Mucosa of descending colon (tissue), 3 donors: ENCODE measurements at regions of chr13 and their contacts with region 1.

Region 1: GRCh38 chr13:23466144-23467002 is 32.9 kb upstream of the SACS start:
- DNase-seq: peak; percentile 59 to 62 (median 60)
- ATAC-seq: peak; percentile 91
- H3K4me3 ChIP-seq: no peak overlapping the region
- H3K4me1 ChIP-seq: peaks cover 4% of the 10 kb centered on the region
- CTCF ChIP-seq: no peak

Region 2: DNA sequence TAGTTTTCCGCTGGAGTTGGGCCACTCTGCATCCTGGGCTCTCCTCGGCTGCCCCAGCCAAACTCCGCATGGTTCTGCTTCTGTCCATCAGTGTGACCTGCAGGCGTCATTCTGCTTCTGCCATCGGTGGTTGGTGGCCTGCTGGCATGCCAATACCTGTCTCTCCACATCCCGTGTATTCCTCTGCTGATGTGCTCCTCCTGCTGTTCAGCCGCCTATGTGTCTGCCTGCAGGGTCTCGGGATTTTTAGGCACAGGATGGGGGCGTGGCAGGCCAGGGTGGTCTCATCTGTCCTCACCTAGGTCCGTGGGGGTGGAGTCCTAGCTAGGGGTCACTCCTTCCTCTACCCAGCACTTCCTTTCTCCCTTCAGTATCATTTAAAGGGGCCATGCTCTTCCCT is 318.6 kb before region 1 on chr13:
- intact Hi-C with region 1: no loop called
- DNase-seq: no peak
- ATAC-seq: no peak
- H3K4me3 ChIP-seq: no peak overlapping the region
- H3K4me1 ChIP-seq: no peaks in the 10 kb centered on the region
- CTCF ChIP-seq: no peak

Region 3: GRCh38 chr13:23871616-23872220 is 405.3 kb after region 1 on chr13:
- intact Hi-C with region 1: loop called (anchors 5 kb)
- DNase-seq: no peak
- ATAC-seq: no peak
- H3K4me3 ChIP-seq: no peak overlapping the region
- H3K4me1 ChIP-seq: peaks cover 6% of the 10 kb centered on the region
- CTCF ChIP-seq: peak; percentile 20